Mammary epithelial cell (primary cell): ENCODE measurements at regions of chr11 and their contacts with region 1.

Region 1: GRCh38 chr11:73760679-73761402 is at the start of gene RAB6A:
- DNase-seq: peak; percentile 99
- H3K4me3 ChIP-seq: peak within 1 kb of the TSS; percentile 83 to 91 (median 88)
- H3K27ac ChIP-seq: peak within 1 kb of the TSS; percentile 62
- H3K4me1 ChIP-seq: peaks cover 6% of the 10 kb centered on the region
- H3K27me3 ChIP-seq: no peaks in the 10 kb centered on the region
- CTCF ChIP-seq: peak; percentile 5 to 35
- total RNA-seq, gene RAB6A: 189 to 218 TPM

Region 2: DNA sequence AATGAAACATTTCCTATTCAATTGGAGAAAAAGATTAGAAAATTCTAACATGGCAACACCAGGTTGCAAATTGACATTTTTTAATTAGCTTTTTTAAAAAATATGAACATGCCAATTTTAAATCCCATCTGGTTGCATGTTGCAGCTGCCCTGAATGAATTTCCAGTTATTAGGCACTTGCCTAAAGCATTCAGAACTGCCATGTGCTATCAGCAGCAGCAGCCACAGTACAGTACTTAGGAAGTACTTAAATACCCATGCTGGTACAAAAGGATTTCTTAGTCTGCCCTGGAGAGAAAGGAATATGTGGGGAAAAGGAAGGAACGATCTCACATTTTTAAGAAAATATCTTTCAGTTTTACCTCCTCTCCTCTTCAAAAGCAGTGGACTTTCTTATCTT is 209.2 kb before region 1 on chr11:
- CTCF ChIA-PET with region 1: no interaction called
- dilution Hi-C with region 1: no loop called
- in situ Hi-C with region 1: no loop called
- intact Hi-C with region 1: no loop called
- DNase-seq: no peak
- H3K4me3 ChIP-seq: no peak overlapping the region
- H3K27ac ChIP-seq: no peak overlapping the region
- H3K4me1 ChIP-seq: no peaks in the 10 kb centered on the region
- H3K27me3 ChIP-seq: no peaks in the 10 kb centered on the region
- CTCF ChIP-seq: no peak

Region 3: DNA sequence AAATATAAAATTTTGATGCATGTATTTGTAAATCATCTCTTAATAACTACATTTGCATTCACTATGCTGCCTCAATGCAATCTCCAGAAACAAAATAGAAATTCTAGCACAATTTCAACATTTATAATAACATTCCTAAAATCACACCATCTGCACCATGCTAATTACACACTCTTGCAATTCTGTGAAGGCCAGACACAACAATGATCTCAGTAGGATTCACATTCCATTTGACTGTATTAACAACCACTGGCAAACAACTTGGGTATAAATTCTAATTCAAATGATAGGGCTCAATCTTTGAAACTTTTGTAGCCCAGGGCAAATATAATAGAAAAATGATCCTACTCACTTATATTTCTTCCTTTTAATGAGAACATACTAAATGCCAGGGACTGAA is 25.8 kb before region 1 on chr11:
- CTCF ChIA-PET with region 1: no interaction called
- dilution Hi-C with region 1: no loop called
- in situ Hi-C with region 1: no loop called
- intact Hi-C with region 1: no loop called
- DNase-seq: peak; percentile 8
- H3K4me3 ChIP-seq: no peak overlapping the region
- H3K27ac ChIP-seq: no peak overlapping the region
- H3K4me1 ChIP-seq: no peaks in the 10 kb centered on the region
- H3K27me3 ChIP-seq: no peaks in the 10 kb centered on the region
- CTCF ChIP-seq: no peak

Region 4: DNA sequence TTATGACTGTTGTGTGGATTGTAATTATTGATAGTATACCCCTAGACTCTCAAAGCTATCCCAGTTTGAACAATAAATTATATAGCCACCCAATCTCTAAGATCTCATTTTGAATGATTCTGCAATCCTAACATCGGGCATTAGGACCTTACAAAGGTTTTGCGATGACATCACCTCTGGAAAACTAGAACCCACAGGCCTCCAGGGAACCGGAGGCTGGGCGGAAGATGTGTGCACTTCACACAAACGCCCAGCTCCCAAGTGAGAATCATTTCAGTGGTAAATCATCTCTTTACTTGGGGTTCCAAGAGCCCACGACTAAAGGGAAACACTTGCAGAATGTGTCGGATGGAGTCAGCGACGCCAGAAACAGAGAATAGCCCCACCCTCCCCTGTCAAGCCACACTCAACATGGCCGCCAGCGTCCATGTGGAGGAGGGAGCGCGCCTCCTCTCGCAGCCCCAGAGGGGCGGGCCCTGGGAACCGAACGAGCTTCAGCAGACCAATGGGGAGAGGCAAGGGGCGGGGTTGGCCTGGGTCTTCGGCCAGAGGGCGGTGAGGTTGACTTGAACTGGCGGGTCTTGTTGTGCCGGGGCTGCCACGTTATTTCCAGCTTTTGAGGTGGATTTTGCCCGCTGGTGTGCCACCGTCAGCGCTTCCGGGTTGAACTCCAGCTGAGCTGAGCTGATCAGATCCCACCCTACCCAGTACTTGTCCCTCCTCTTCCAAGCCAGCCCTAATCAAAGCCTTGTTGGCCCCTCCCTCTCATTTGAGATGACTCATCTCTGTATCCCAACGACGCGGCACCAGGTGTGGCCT is 18.5 kb after region 1 on chr11:
- CTCF ChIA-PET with region 1: interaction called, 3 read pairs
- dilution Hi-C with region 1: no loop called
- in situ Hi-C with region 1: no loop called
- intact Hi-C with region 1: loop called (anchors 1 kb)
- DNase-seq: peak; percentile 98
- H3K4me3 ChIP-seq: peak overlapping the region; percentile 52 to 55 (median 54)
- H3K27ac ChIP-seq: peak overlapping the region; percentile 98
- H3K4me1 ChIP-seq: peaks cover 4% of the 10 kb centered on the region
- H3K27me3 ChIP-seq: no peaks in the 10 kb centered on the region
- CTCF ChIP-seq: no peak

Region 5: DNA sequence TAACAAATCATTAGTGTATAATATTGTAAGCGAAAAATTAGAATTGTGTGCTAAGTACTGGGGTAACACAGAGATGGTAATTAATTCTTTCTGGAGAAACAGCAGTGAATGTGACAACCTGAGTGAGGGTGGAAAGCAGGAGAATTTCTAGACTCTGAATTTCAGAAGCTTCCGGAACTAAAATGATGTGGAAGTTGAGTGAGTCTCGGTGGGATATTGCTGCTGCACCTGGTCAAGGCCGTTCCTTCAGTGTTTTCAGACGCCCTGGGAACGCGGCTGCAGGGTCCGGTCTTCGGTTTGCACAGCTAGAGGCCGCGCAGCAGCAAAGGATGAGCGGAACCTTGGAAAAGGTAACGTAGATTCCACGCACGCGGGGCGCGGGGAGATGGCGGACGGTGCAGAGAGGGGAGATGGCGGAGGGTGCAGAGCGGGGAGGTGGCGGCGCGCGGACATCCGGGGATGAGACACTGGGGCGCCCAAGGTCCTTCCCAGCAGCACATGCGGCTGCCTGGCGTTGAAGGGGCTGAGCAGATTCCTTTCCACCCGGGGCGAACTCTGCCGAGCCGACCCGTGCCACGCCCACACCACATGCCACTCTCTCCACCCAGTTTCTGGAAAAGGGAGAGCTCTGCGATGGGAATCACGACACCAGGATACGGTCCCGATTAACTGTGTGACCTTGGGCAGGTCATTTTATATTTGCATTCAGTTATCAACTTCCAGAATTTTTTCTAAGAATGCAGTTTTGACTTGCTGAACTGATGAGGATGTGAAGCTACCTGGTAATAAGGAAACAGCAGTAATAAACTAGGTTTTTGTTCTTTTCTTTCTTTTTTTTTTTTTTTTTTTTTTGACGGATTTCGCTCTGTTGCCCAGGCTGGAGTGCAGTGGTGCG is 27.0 kb after region 1 on chr11 and contains the start of gene MRPL48:
- CTCF ChIA-PET with region 1: interaction called, 10 read pairs
- dilution Hi-C with region 1: no loop called
- in situ Hi-C with region 1: no loop called
- intact Hi-C with region 1: loop called (anchors 1 kb)
- DNase-seq: peak; percentile 91
- H3K4me3 ChIP-seq: peak within 1 kb of the TSS; percentile 71 to 100 (median 74)
- H3K27ac ChIP-seq: peak within 1 kb of the TSS; percentile 76
- H3K4me1 ChIP-seq: peaks cover 12% of the 10 kb centered on the region
- H3K27me3 ChIP-seq: no peaks in the 10 kb centered on the region
- CTCF ChIP-seq: no peak
- total RNA-seq, gene MRPL48: 12.8 to 35.1 TPM

Region 6: GRCh38 chr11:73800276-73800806 is 39.5 kb after region 1 on chr11:
- CTCF ChIA-PET with region 1: no interaction called
- dilution Hi-C with region 1: no loop called
- in situ Hi-C with region 1: no loop called
- intact Hi-C with region 1: no loop called
- DNase-seq: no peak
- H3K4me3 ChIP-seq: no peak overlapping the region
- H3K27ac ChIP-seq: no peak overlapping the region
- H3K4me1 ChIP-seq: no peaks in the 10 kb centered on the region
- H3K27me3 ChIP-seq: no peaks in the 10 kb centered on the region
- CTCF ChIP-seq: no peak

Region 7: DNA sequence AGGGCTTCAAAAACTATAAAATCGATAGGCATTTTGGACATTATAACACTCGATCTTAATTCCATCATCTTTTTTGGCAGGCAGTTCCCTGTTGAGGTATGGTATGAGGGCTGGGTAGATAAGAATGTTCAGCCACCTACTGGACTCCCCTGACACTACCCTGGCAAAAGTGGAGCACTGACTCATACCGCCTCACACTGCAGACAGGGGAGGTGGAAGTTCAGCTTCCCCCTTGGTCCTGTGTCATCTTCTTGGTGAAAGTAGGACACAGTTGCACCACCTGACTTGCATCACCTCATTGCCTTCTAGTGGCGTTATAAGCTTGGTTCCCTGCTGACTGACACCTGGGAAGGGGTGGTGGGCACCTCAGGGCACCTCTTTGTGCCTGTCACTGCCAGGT is 146.3 kb after region 1 on chr11:
- CTCF ChIA-PET with region 1: no interaction called
- dilution Hi-C with region 1: no loop called
- in situ Hi-C with region 1: no loop called
- intact Hi-C with region 1: loop called (anchors 1 kb)
- DNase-seq: peak; percentile 67
- H3K4me3 ChIP-seq: no peak overlapping the region
- H3K27ac ChIP-seq: no peak overlapping the region
- H3K4me1 ChIP-seq: no peaks in the 10 kb centered on the region
- H3K27me3 ChIP-seq: no peaks in the 10 kb centered on the region
- CTCF ChIP-seq: peak; percentile 32 to 54

Region 8: GRCh38 chr11:74634537-74634936 is 873.7 kb after region 1 on chr11:
- CTCF ChIA-PET with region 1: no interaction called
- dilution Hi-C with region 1: no loop called
- in situ Hi-C with region 1: no loop called
- intact Hi-C with region 1: no loop called
- DNase-seq: peak; percentile 93
- H3K4me3 ChIP-seq: no peak overlapping the region
- H3K27ac ChIP-seq: no peak overlapping the region
- H3K4me1 ChIP-seq: peaks cover 58% of the 10 kb centered on the region
- H3K27me3 ChIP-seq: no peaks in the 10 kb centered on the region
- CTCF ChIP-seq: peak; percentile 55 to 74